ENCODE measurements at regions of chr16 and their contacts with region 1.

Region 1: DNA sequence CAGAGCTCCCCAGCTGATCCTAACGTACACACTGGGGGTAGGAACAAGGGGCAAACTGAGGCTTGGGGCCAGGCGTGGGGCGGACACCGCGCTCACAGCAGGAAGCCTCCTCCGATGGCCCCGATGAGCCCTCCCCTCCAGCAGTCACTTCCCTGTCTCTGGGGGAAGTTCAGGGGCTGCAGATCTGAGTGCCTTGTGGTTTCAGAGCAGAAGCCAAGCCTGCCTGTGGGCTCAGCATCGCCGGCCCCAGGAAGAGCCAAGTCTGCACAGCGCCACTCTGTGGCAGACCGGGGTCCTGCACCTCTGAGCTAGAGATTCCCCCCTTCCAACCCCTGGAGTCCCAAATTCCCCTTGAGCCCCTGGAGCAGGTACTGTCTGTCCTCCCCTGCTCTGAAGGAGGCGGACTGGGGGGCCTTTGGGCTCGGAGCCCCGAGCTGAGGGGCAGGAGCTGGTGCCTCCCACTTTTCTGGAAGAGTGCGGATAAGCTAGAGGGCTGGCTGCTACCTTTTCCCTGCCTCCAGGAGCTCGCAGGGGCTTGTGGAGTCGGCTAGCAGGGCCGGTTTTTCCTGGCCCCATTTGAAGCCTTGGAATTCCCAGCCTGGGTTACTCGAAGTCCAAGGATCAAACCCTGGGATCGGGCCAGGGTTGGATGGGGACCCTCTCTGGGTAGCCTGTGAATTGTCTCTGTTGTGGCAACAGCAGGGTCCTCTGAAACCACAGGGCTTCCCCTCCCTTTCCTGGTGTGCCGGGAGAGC is 2.9 kb downstream of the GSE1 start:
- DNase-seq: peak; percentile 51
- H3K4me3 ChIP-seq: no peak overlapping the region
- H3K27ac ChIP-seq: peak overlapping the region; percentile 11
- H3K27me3 ChIP-seq: no peaks in the 10 kb centered on the region
- CTCF ChIP-seq: peak; percentile 90

Region 2: DNA sequence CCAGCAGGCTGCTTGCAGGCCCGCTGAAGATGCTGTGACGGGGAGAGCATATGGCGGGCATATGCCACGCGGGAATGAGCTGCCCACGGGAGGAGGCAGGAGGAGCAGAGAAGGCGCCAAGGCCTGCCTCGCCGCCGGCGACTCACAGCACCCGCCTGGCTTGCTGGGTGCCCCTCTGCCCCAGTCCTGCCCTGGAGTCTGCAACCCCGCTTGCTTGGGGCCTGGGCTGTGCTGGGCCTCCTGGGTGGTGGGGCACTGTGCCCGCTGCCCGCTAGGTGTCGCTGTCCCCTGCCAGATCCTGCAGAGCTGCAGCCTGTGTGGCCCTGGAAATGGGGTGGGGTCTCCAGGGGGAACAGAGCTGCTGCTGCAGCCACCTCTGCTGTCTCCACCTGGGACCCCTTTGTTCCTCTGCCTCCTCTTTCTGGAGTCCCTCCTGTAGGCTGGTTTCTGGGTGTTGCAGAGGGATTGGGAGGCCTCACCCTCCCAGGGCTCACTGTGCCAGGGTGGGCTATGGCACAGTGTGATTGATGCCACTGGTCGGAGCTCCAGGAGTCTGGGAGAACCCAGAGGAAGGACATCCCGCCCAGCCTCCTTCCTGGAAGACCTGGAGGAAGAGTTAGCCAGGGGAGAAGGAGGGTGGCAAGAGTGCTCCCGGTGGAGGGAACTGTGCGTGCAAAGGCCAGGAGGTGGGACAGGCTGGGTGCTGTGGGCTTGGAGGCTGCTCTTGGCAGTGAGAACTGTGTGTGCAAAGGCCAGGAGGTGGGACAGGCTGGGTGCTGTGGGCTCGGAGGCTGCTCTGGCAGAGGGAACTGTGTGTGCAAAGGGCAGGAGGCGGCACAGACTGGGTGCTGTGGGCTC is 362.7 kb before region 1 on chr16:
- CTCF ChIA-PET with region 1: interaction called, 11 read pairs
- POLR2A ChIA-PET with region 1: no interaction called
- DNase-seq: no peak
- H3K4me3 ChIP-seq: no peak overlapping the region
- H3K27ac ChIP-seq: no peak overlapping the region
- H3K27me3 ChIP-seq: no peaks in the 10 kb centered on the region
- CTCF ChIP-seq: peak; percentile 83

Region 3: GRCh38 chr16:85275533-85276249 is 340.3 kb before region 1 on chr16:
- CTCF ChIA-PET with region 1: interaction called, 25 read pairs
- POLR2A ChIA-PET with region 1: no interaction called
- DNase-seq: no peak
- H3K4me3 ChIP-seq: no peak overlapping the region
- H3K27ac ChIP-seq: no peak overlapping the region
- H3K27me3 ChIP-seq: no peaks in the 10 kb centered on the region
- CTCF ChIP-seq: peak; percentile 96

Region 4: GRCh38 chr16:85381738-85382592 is 234.1 kb before region 1 on chr16:
- CTCF ChIA-PET with region 1: no interaction called
- POLR2A ChIA-PET with region 1: no interaction called
- DNase-seq: no peak
- H3K4me3 ChIP-seq: no peak overlapping the region
- H3K27ac ChIP-seq: peak overlapping the region; percentile 42
- H3K27me3 ChIP-seq: no peaks in the 10 kb centered on the region
- CTCF ChIP-seq: no peak

Region 5: DNA sequence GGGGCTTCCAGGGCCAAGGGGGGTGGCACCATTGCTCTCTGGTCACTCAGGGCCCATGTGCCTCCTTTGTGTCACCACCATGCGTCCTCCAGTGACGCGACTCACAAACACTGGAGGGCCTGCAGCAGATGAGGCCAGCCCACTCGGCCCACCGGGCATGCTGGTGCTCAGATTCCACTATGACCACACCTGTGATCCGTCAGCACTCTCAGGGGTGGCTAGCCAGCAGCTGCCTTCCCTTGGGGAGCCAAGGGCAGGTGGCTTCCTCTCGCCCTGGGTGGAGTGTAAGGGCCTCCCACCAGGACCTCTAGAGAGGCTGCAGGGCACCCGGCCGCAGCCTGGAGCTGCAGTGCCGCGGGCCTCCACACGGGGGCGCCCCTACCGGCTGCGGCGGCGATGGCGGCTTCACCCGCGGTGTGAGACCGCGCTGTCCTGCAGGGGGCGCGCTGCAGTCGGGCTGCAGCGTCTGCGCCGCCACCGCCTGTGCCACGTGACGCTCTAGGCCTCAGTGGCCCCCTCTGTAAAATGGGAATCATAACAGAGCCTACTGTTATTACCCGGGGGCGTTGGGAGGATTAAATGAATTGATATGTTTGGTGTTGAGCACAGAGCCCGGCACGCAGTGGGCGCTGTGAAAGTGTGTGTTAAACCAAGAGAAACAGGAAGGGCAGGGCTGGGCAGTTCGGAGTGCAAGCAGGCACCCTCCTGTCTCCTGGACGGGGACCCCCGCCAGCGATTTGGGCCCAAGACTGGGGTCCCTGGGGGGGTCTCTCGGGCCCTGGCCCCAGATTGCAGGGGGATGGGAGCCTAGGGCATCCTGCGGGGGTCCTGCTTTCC is 195.3 kb before region 1 on chr16:
- CTCF ChIA-PET with region 1: interaction called, 20 read pairs
- POLR2A ChIA-PET with region 1: no interaction called
- DNase-seq: no peak
- H3K4me3 ChIP-seq: no peak overlapping the region
- H3K27ac ChIP-seq: no peak overlapping the region
- H3K27me3 ChIP-seq: no peaks in the 10 kb centered on the region
- CTCF ChIP-seq: peak; percentile 81

Region 6: GRCh38 chr16:85626191-85626981 is 10.4 kb after region 1 on chr16:
- CTCF ChIA-PET with region 1: interaction called, 19 read pairs
- POLR2A ChIA-PET with region 1: no interaction called
- DNase-seq: no peak
- H3K4me3 ChIP-seq: no peak overlapping the region
- H3K27ac ChIP-seq: no peak overlapping the region
- H3K27me3 ChIP-seq: no peaks in the 10 kb centered on the region
- CTCF ChIP-seq: no peak

Region 7: DNA sequence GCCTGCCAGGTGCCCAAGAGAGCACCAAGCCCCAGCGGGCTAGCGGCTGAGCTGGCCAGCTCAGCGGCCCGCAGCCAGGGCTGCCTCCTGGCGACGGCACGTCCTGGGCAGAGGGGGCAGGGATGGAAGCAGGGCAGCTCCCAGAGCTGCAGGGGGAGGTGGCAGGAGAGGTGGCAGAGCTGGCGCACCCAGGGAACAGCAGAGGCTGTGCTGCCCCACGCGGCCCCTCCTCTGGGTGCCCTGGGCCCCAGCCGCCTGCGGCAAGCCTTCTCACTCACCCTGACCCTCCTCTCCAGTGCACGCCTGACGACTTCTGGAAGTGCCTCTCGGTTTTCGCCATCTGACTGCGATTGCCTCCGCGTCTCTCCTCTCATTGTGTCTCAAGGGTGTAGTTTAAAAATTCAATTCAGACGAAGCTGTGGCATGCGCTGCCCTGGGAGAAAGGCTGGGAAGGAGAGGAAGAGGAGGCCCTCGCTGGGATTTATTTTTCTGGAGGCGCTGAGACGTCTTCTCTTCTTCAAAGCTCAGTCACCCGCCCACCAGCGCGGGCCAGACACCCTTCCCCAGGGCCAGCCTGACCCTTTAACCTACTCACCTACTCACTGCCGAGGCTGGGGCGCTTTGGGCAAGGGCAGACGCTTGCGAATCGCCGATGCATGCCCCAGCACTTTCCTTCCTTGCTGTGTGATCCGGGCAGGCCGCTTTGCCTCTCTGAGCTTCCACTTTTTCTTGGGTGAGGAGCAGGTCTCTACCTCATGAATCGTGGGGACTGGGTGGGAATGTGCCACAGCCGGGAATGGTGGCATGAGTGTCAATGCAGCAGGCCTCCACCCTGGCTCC is 22.0 kb after region 1 on chr16:
- CTCF ChIA-PET with region 1: interaction called, 12 read pairs
- POLR2A ChIA-PET with region 1: no interaction called
- DNase-seq: no peak
- H3K4me3 ChIP-seq: no peak overlapping the region
- H3K27ac ChIP-seq: no peak overlapping the region
- H3K27me3 ChIP-seq: no peaks in the 10 kb centered on the region
- CTCF ChIP-seq: no peak

Region 8: GRCh38 chr16:85675251-85675927 is 59.4 kb after region 1 on chr16:
- CTCF ChIA-PET with region 1: interaction called, 11 read pairs
- POLR2A ChIA-PET with region 1: no interaction called
- DNase-seq: no peak
- H3K4me3 ChIP-seq: no peak overlapping the region
- H3K27ac ChIP-seq: no peak overlapping the region
- H3K27me3 ChIP-seq: no peaks in the 10 kb centered on the region
- CTCF ChIP-seq: peak; percentile 65

Measured in AG04450 (cell line).